A549 (cell line): ENCODE measurements at regions of chr10 and their contacts with region 1.

Region 1: DNA sequence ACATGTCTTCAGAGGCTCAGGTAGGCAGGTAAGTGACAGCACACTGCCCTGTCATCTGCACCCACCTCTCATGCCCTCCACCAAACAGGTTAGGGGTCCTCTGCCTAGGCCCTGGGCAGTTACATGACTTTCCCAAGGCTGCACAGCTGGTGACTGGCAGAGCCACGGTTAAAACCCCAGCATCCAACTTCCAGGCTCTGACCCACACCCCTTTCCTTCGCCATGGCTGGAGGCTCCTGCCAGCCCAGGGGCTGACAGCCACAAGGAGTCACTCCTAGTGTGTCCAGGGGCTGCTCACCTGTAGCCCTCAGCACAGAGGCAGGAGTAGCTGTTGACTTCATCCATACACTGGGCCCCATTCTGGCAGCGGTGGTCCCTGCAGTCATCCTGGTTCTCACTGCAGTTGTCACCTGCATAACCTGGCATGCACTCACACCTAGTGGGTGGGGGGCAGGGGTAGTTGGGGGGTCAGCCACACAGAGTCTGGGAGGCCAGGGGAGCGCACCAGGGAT is 175.0 kb downstream of the SLIT1 start:
- DNase-seq: no peak
- ATAC-seq: peak; percentile 35 to 47; a peak in 4 of 6 replicates
- H3K4me3 ChIP-seq: no peak overlapping the region
- H3K27ac ChIP-seq: no peak overlapping the region
- H3K4me1 ChIP-seq: no peaks in the 10 kb centered on the region
- CTCF ChIP-seq: no peak
- EP300 ChIP-seq: no peak
- POLR2A ChIP-seq: no peak
- RAD21 ChIP-seq: no peak

Region 2: DNA sequence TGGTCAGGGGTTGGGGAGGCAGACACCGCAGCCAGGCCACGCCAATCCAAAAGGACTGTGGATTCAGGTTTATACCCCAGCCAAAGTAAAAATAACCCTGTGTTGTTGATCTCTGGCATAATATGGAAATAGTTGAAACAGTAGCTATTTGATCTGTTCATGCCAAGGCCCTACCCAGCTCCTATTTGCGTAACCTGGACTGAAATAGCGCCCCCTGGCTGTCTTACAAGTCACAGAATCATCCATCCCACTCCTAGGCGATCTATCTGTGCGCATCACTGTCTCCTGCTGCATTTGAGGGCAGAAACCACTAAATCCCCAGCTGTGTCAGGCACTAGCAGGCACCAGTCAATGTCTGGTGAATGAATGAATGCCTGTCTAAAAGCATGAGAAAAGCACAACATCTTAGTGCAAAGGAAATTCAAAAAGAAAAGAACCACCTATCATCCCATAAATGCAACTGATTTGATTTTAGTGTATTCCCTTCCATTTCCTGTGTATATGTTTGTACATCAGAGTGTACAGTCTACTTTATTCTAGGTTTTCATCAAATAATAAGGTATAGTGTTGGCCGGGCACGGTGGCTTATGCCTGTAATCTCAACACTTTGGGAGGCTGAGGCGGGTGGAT is 15.0 kb after region 1 on chr10:
- CTCF ChIA-PET with region 1: interaction called, 24 read pairs
- POLR2A ChIA-PET with region 1: no interaction called
- DNase-seq: peak; percentile 44 to 75
- ATAC-seq: peak in 1 of 2 experiments; percentile 74; a peak in 3 of 6 replicates
- H3K4me3 ChIP-seq: no peak overlapping the region
- H3K27ac ChIP-seq: peak overlapping the region in 1 of 2 experiments; percentile 82; a peak in 2 of 6 replicates
- H3K4me1 ChIP-seq: peaks cover 28% of the 10 kb centered on the region
- CTCF ChIP-seq: peak; percentile 62
- EP300 ChIP-seq: no peak
- POLR2A ChIP-seq: no peak
- RAD21 ChIP-seq: peak; percentile 19 to 42; a peak in 3 of 5 replicates

Region 3: GRCh38 chr10:97128516-97129154 is 117.9 kb after region 1 on chr10:
- CTCF ChIA-PET with region 1: no interaction called
- POLR2A ChIA-PET with region 1: no interaction called
- DNase-seq: no peak
- ATAC-seq: no peak
- H3K4me3 ChIP-seq: no peak overlapping the region
- H3K27ac ChIP-seq: no peak overlapping the region
- H3K4me1 ChIP-seq: no peaks in the 10 kb centered on the region
- CTCF ChIP-seq: no peak
- EP300 ChIP-seq: no peak
- POLR2A ChIP-seq: no peak
- RAD21 ChIP-seq: no peak

Region 4: GRCh38 chr10:97534746-97535367 is 524.1 kb after region 1 on chr10:
- CTCF ChIA-PET with region 1: no interaction called
- POLR2A ChIA-PET with region 1: no interaction called
- DNase-seq: peak; percentile 61 to 67
- ATAC-seq: peak; percentile 77 to 87
- H3K4me3 ChIP-seq: no peak overlapping the region
- H3K27ac ChIP-seq: 0 out of 6 replicates have a peak overlapping the region, but pooled peaks of 1 of the 2 experiments have one; percentile 16
- H3K4me1 ChIP-seq: peaks cover 20% of the 10 kb centered on the region
- CTCF ChIP-seq: peak; percentile 59
- EP300 ChIP-seq: no peak
- POLR2A ChIP-seq: no peak
- RAD21 ChIP-seq: peak; percentile 52 to 74